ENCODE measurements at regions of chr6 and their contacts with region 1.

Region 1: DNA sequence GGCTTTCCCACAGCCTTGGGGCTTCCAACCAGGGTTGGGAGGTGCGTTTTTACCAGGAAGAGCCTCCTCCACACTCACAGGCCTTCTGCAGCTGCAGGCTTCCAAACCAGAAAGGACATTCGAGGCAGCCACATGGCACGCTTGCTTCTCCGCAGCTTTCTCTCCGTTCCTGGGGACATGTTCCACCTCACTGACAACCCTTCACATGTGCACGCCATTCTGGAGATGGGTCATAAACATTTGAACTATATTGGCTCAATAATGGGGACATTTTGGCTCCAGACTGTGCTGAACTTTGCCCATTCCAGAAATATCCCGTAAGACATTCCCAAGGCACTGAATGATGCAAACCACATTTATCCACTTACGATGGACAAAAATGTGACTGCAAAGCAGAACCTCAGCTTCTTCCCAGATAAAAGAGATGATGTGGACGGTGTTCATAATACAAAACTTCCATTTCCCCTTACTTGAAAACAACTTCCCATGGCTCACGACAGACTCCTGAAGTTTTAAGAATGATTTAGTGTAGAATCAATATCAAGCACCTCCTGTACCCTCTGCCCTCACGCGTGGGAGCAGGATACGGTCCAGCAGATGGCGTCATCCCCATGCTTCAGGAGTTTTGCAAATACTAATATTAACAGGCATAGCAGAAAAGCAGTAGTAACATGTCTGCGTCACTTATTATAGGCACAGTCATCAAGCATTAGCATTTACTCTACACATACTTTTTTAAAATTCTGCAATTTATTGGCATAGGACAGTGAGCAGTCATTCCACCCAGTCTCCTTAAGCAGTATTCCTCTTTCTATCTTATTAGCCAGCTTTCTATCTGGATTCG is 25.4 kb upstream of the FOXF2 start:
- DNase-seq: peak; percentile 18
- ATAC-seq: peak; percentile 78
- H3K4me3 ChIP-seq: no peak overlapping the region
- H3K27ac ChIP-seq: no peak overlapping the region
- H3K4me1 ChIP-seq: no peaks in the 10 kb centered on the region
- H3K27me3 ChIP-seq: no peaks in the 10 kb centered on the region
- CTCF ChIP-seq: peak; percentile 55 to 65 (median 57); a peak in 5 of 6 replicates
- POLR2A ChIP-seq: no peak
- RAD21 ChIP-seq: peak; percentile 66

Region 2: DNA sequence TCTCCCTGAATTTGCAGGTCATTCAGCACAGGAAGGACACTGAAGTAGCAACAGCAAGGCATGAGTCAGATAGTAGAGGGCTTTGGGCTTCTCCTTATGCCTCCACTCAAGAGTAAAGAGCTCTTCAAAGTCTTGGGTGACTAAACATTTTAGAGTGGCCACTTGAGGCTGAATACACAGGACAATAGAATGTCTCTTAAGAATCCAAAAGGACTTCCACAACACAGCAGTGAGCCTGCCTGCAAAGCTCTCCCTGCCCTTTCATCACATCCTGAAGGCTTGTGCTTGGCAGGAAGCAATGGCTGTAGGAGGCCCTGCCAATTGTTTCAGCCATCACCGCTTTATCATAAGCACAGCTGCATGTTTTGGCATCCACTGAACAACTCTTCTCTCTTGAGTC is 15.3 kb before region 1 on chr6:
- CTCF ChIA-PET with region 1: no interaction called
- POLR2A ChIA-PET with region 1: no interaction called
- RAD21 ChIA-PET with region 1: no interaction called
- intact Hi-C with region 1: no loop called
- DNase-seq: no peak
- ATAC-seq: no peak
- H3K4me3 ChIP-seq: no peak overlapping the region
- H3K27ac ChIP-seq: no peak overlapping the region
- H3K4me1 ChIP-seq: peaks cover 0 to 4% of the 10 kb centered on the region in 2 experiments; a peak in 1 of 4 replicates
- H3K27me3 ChIP-seq: no peaks in the 10 kb centered on the region
- CTCF ChIP-seq: no peak
- POLR2A ChIP-seq: no peak
- RAD21 ChIP-seq: no peak

Region 3: DNA sequence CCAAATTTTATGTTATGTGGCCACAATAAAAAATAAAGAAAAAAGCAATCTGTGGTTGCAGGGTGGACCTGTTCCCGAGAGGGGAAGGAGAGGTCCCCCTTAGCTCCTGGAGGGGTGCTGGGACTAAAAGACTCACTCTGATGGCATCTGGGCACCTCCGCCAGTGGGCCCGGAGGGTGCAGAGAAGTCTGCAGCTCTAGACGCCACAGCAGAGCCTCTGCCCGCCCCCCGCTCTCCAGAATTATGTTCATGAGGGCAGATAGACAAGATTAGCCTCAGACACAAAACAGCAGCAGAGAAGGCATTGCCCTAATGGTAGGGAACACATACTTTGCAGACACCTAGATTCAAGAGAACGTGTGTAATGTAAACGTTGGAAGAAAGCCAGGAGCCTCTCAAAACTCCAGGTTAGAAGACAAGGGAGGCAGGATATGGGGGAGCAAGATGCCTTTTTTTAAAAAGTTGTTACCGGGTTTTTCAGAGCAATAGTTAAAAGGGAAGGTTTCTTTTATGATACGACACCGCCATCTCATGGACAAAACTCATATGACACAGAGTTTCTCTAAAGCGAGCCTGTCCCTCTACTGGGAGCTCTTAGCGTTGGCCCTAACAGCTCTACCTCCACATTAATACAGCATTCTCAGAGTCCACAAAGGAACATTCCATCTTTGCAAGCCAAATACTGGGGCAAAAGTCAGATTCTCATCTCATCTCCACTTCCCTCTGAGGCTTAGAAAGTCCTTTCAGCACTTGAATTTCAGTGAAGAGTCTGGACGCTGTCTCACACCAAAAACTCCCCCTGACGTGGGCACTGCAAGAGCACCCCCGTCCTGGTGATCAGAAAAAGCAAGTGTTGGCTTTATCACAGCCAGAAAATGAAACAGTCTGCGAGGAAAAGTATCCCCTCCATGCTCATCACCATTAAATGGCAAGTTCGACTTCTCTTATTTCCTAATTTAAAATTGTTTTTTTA is 72.7 kb after region 1 on chr6:
- CTCF ChIA-PET with region 1: interaction called, 6 read pairs
- POLR2A ChIA-PET with region 1: no interaction called
- RAD21 ChIA-PET with region 1: no interaction called
- intact Hi-C with region 1: loop called (anchors 2 kb)
- DNase-seq: peak; percentile 57
- ATAC-seq: peak; percentile 97
- H3K4me3 ChIP-seq: no peak overlapping the region
- H3K27ac ChIP-seq: no peak overlapping the region
- H3K4me1 ChIP-seq: peaks cover 0 to 5% of the 10 kb centered on the region in 2 experiments; a peak in 2 of 4 replicates
- H3K27me3 ChIP-seq: peaks cover 5% of the 10 kb centered on the region; the same call in 1 of the 2 replicates
- CTCF ChIP-seq: peak; percentile 61 to 84 (median 72)
- POLR2A ChIP-seq: no peak
- RAD21 ChIP-seq: peak; percentile 81

Measured in HCT116 (cell line).